Mammary epithelial cell (primary cell): ENCODE measurements at regions of chr6 and their contacts with region 1.

Region 1: DNA sequence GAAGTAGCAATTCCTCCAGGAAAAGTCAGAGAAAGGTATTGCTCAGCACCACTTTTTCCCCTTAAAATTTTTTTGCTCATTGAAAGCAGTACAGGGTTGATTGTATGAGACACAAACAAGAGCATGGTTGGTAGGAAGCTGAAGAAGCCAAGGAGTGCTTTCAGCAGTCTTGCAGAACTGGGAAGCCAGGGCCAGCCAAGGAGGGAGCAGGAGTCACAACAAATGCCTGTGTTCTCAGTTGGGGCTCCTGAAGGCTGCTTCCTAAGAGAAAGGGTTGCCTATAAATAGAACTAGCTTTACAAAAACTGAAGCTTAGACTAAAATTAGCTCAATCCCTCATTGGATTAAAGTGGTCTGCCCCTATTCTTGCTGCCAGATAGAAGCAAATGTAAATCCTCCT is 3.3 kb upstream of the THEMIS start:
- DNase-seq: no peak
- H3K4me3 ChIP-seq: no peak overlapping the region
- H3K27ac ChIP-seq: no peak overlapping the region
- H3K4me1 ChIP-seq: no peaks in the 10 kb centered on the region
- H3K27me3 ChIP-seq: peaks cover 2% of the 10 kb centered on the region
- CTCF ChIP-seq: no peak

Region 2: DNA sequence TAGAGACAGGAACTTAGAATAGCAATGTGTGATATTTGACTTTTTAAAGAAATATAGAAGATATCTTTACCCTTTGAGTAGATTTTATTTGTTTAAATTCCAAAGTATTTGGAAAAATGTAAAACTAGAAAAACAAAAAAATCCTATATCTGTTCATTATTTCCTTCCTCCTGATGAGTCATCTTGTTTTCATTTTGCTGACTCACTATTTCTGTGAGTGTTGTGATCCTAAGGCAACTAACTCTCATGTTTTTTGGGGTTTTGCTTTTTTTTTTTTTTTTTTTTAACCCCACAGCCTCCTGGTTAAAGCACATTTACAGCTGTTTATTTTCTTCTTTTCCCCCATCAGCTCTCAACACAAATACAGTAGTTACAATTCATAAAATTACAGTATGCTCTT is 34.5 kb after region 1 on chr6:
- CTCF ChIA-PET with region 1: interaction called, 17 read pairs
- dilution Hi-C with region 1: no loop called
- in situ Hi-C with region 1: no loop called
- intact Hi-C with region 1: no loop called
- DNase-seq: peak; percentile 61
- H3K4me3 ChIP-seq: no peak overlapping the region
- H3K27ac ChIP-seq: peak overlapping the region; percentile 82
- H3K4me1 ChIP-seq: peaks cover 5% of the 10 kb centered on the region
- H3K27me3 ChIP-seq: no peaks in the 10 kb centered on the region
- CTCF ChIP-seq: no peak